HepG2 (cell line): ENCODE measurements at regions of chr16 and their contacts with region 1.

Region 1: DNA sequence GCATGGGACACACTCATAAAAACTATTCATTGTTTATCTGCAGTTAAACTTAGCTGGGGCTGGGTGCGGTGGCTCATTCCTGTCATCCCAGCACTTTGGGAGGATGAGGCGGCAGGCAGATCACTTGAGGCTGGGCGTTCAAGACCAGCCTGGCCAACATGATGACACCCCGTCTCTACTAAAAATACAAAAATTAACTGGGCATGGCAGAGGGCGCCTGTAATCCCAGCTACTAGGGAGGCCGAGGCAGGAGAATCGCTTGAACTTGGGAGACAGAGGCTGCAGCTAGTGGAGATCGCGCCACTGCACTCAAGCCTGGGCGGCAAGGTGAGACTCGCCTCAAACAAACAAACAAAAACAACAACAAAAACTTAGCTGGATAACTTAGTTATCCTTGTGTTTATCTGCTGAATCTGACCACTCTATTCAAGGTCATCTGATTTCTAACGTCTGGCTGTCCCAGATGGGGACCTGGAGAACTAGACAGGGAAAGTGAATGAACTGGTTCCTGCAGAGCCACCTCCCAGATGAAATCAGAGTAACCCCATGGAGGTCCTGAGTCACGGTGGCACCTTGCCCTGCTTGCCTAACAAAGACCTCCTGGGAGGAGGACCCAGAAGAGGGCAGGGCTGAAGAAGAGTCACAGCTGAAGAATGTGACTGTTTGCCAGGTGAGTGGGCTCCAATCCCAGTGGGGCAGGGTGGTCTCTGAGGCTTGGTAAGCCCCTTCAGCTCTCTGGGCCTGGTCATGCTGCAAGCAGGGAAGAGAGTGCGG is 4.7 kb downstream of the C16orf74 start:
- DNase-seq: no peak
- ATAC-seq: no peak
- H3K4me3 ChIP-seq: no peak overlapping the region
- H3K27ac ChIP-seq: no peak overlapping the region
- H3K4me1 ChIP-seq: 0 out of 2 replicates have a peak, but pooled peaks cover 7% of the 10 kb centered on the region
- H3K27me3 ChIP-seq: peaks cover 8 to 21% of the 10 kb centered on the region in 2 experiments
- CTCF ChIP-seq: no peak
- EP300 ChIP-seq: no peak
- POLR2A ChIP-seq: no peak
- RAD21 ChIP-seq: no peak

Region 2: DNA sequence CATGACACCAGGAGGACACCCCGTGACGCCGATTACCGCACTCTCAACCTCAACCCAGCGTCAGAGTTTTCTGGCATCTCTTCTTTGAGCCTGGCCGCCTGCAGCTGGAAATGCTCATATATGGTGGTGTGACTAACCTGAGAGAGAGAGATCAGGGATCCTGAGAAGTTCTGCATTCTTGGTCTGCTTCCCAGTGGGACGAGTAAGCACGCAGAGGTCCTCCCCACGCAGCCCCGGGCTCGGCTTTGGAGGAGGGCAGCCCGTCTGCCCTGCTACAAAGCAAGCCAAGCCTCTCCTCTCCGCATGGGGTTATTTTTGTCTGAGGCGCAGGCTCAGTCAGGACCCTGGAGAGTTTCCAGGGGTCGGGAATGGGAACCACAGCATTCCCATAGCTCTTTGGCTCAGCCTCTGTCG is 910.0 kb before region 1 on chr16:
- CTCF ChIA-PET with region 1: no interaction called
- POLR2A ChIA-PET with region 1: no interaction called
- in situ Hi-C with region 1: no loop called
- intact Hi-C with region 1: loop called (anchors 5 kb)
- DNase-seq: no peak
- ATAC-seq: no peak
- H3K4me3 ChIP-seq: no peak overlapping the region
- H3K27ac ChIP-seq: no peak overlapping the region
- H3K4me1 ChIP-seq: 0 out of 2 replicates have a peak, but pooled peaks cover 6% of the 10 kb centered on the region
- H3K27me3 ChIP-seq: peaks cover 17 to 78% of the 10 kb centered on the region in 2 experiments
- CTCF ChIP-seq: no peak
- EP300 ChIP-seq: no peak
- POLR2A ChIP-seq: no peak
- RAD21 ChIP-seq: no peak

Region 3: GRCh38 chr16:85688586-85689284 is 57.5 kb before region 1 on chr16 and contains the start of gene GINS2:
- CTCF ChIA-PET with region 1: no interaction called
- POLR2A ChIA-PET with region 1: no interaction called
- in situ Hi-C with region 1: no loop called
- intact Hi-C with region 1: no loop called
- DNase-seq: peak; percentile 87
- ATAC-seq: peak; percentile 98
- H3K4me3 ChIP-seq: peak within 1 kb of the TSS; percentile 66 to 88 (median 84)
- H3K27ac ChIP-seq: peak within 1 kb of the TSS; percentile 63
- H3K4me1 ChIP-seq: peaks cover 38% of the 10 kb centered on the region
- H3K27me3 ChIP-seq: peaks cover 0 to 34% of the 10 kb centered on the region in 2 experiments; a peak in 4 of 5 replicates
- CTCF ChIP-seq: no peak
- EP300 ChIP-seq: no peak
- POLR2A ChIP-seq: peak; percentile 65 to 80; a peak in 3 of 4 replicates
- RAD21 ChIP-seq: peak; percentile 27; the same call in 1 of the 2 replicates
- total RNA-seq, gene GINS2: 48.3 and 61.7 TPM in 2 replicates